ENCODE measurements at regions of chr15 and their contacts with region 1.

Region 1: GRCh38 chr15:22806664-22807063 is 20.2 kb downstream of the NIPA1 start:
- DNase-seq: peak in 1 of 5 donors; percentile 36
- ATAC-seq: peak in 3 of 4 donors; percentile 36 to 64 (median 42)
- H3K4me3 ChIP-seq: no peak overlapping the region
- H3K27ac ChIP-seq: no peak overlapping the region
- H3K4me1 ChIP-seq: peaks cover 0 to 11% (median 0%) of the 10 kb centered on the region in 12 donors
- H3K27me3 ChIP-seq: no peaks in the 10 kb centered on the region
- CTCF ChIP-seq: no peak
- POLR2A ChIP-seq: no peak

Region 2: GRCh38 chr15:22872936-22873701 is 66.5 kb after region 1 on chr15:
- intact Hi-C with region 1: loop called in 1 of 10 experiments (anchors 10 kb)
- DNase-seq: no peak
- ATAC-seq: peak in 1 of 4 donors; percentile 25
- H3K4me3 ChIP-seq: no peak overlapping the region
- H3K27ac ChIP-seq: peak overlapping the region in 5 of 12 donors; percentile 8 to 57 (median 47)
- H3K4me1 ChIP-seq: peaks cover 0 to 10% (median 0%) of the 10 kb centered on the region in 12 donors
- H3K27me3 ChIP-seq: no peaks in the 10 kb centered on the region
- CTCF ChIP-seq: no peak
- POLR2A ChIP-seq: no peak

Region 3: DNA sequence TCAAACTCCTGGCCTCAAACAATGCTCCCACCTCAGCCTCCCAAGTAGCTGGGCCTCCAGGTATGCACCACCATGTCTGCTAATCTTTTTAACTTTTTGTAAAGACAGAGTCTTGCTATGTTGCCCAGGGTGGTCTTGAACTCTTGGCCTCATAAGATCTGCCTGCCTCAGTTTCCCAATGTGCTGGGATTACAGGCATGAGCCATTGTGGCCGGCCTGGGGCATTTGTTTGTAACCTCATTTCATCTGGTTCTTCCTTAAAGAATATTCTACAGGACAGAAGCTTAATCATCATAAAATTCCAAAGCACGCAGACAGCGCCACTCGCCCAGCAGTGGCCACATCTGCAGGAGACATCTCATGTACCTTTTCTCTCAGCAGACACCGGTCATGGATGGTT is 197.1 kb after region 1 on chr15:
- intact Hi-C with region 1: no loop called
- DNase-seq: no peak
- ATAC-seq: no peak
- H3K4me3 ChIP-seq: no peak overlapping the region
- H3K27ac ChIP-seq: no peak overlapping the region
- H3K4me1 ChIP-seq: no peaks in the 10 kb centered on the region
- H3K27me3 ChIP-seq: no peaks in the 10 kb centered on the region
- CTCF ChIP-seq: no peak
- POLR2A ChIP-seq: no peak

Measured in heart left ventricle (tissue), 16 donors.